Activated B cell treated with CpG ODN at 0.5 μM for 24 hours (primary cell): ENCODE measurements at regions of chr12 and their contacts with region 1.

Region 1: DNA sequence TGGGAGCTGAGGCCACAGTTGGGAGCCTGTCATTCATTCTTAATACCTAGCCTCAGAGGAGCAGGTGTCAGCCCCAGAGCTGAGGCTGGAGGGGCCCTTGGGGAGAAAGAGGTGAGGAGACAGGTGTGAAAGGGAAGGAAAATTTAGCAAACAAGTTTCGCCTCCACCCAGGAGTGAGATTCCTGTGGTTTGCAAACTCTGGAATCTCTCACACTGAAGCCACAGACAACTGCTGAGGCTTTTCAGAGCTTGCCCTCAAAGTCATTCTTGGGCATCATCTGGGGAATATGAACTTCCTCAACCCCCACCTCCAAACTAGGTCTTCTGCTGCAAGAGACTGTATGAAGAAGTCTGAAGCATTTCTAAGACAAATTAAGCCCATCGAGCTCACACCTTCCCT is 589.5 kb upstream of the TBX3 start:
- DNase-seq: no peak
- ATAC-seq: no peak
- H3K4me3 Mint-ChIP-seq: no peak overlapping the region
- H3K27ac Mint-ChIP-seq: no peak overlapping the region
- H3K4me1 Mint-ChIP-seq: no peaks in the 10 kb centered on the region
- H3K27me3 Mint-ChIP-seq: no peaks in the 10 kb centered on the region
- CTCF ChIP-seq: no peak

Region 2: DNA sequence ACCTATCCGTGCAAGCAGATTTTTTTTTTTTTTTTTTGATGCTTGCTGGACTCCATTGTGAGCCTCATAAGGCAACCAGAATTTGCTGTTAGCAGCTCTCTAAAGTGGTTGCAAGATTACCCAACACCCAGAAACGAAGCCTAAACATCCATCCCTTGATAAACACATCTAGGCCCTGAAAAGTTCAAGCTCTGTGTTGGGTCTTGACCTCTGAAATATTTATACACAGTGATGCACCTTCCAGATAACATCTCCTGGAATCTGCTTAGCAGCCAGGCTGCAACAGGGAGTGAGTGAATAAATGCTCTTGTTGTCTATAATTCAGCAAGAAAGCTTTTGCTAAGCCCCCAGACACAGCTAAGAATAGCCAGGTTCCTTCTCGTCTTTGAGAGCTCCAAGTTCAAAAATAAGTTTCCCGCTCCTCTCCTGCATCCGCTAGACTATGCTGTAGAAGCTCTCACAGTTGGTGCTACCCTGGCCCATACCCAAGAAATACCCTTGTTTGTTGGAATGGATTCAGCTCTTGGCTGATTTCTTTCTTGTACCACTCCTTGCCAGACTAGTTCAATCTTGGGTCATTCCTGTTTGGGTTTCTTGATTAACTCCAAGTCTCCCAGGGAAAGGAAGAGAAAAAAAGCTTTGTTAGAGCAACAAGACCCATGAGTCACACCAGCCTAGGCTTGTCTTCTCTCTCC is 21.1 kb after region 1 on chr12:
- CTCF ChIA-PET with region 1: no interaction called
- POLR2A ChIA-PET with region 1: no interaction called
- intact Hi-C with region 1: loop called (anchors 2 kb)
- DNase-seq: no peak
- ATAC-seq: no peak
- H3K4me3 Mint-ChIP-seq: no peak overlapping the region
- H3K27ac Mint-ChIP-seq: no peak overlapping the region
- H3K4me1 Mint-ChIP-seq: no peaks in the 10 kb centered on the region
- H3K27me3 Mint-ChIP-seq: no peaks in the 10 kb centered on the region
- CTCF ChIP-seq: no peak

Region 3: DNA sequence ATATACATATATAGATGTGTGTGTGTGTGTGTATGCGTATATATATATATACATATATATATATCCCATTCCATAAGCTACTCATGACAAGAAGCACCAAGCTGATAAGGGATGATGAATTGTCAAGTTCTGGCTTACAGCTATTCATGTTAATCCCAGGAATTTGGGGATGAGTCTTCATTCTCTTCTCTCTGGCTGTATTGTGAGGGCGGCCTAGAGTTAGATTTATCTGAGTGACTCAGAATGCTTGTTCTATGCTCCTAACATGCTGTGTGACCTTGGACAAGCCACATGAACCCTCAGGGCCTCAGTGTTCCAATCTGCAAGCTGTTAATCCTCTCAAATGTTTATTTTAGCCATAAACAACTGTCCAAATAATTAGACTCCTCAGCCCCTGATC is 255.0 kb after region 1 on chr12:
- CTCF ChIA-PET with region 1: no interaction called
- POLR2A ChIA-PET with region 1: no interaction called
- intact Hi-C with region 1: no loop called
- DNase-seq: no peak
- ATAC-seq: no peak
- H3K4me3 Mint-ChIP-seq: no peak overlapping the region
- H3K27ac Mint-ChIP-seq: no peak overlapping the region
- H3K4me1 Mint-ChIP-seq: no peaks in the 10 kb centered on the region
- H3K27me3 Mint-ChIP-seq: peaks cover under 1% of the 10 kb centered on the region
- CTCF ChIP-seq: no peak